ENCODE measurements at regions of chr1 and their contacts with region 1.

Region 1: GRCh38 chr1:226062558-226063223 is at the start of gene H3-3A:
- DNase-seq: peak; percentile 99
- H3K4me3 ChIP-seq: peak within 1 kb of the TSS; percentile 82 to 89 (median 86)
- H3K27ac ChIP-seq: peak within 1 kb of the TSS; percentile 99 to 100 (median 100)
- H3K4me1 ChIP-seq: peaks cover 33 to 47% (median 42%) of the 10 kb centered on the region in 4 donors
- H3K27me3 ChIP-seq: no peaks in the 10 kb centered on the region
- CTCF ChIP-seq: peak in 1 of 5 experiments; percentile 32
- EP300 ChIP-seq: no peak
- POLR2A ChIP-seq: peak; percentile 99
- total RNA-seq, gene H3-3A: 128 to 557 (median 501) TPM

Region 2: GRCh38 chr1:225999227-225999911 is 63.3 kb before region 1 on chr1 and contains the start of gene SDE2:
- in situ Hi-C with region 1: loop called in 1 of 4 experiments (anchors 5 kb)
- intact Hi-C with region 1: no loop called
- DNase-seq: peak; percentile 100
- H3K4me3 ChIP-seq: peak within 1 kb of the TSS; percentile 52 to 78 (median 72)
- H3K27ac ChIP-seq: peak within 1 kb of the TSS; percentile 96 to 100 (median 97)
- H3K4me1 ChIP-seq: peaks cover 10 to 48% (median 33%) of the 10 kb centered on the region in 4 donors
- H3K27me3 ChIP-seq: no peaks in the 10 kb centered on the region
- CTCF ChIP-seq: no peak
- EP300 ChIP-seq: peak; percentile 81
- POLR2A ChIP-seq: peak; percentile 99
- total RNA-seq, gene SDE2: 4.4 to 19.2 (median 13.2) TPM

Region 3: DNA sequence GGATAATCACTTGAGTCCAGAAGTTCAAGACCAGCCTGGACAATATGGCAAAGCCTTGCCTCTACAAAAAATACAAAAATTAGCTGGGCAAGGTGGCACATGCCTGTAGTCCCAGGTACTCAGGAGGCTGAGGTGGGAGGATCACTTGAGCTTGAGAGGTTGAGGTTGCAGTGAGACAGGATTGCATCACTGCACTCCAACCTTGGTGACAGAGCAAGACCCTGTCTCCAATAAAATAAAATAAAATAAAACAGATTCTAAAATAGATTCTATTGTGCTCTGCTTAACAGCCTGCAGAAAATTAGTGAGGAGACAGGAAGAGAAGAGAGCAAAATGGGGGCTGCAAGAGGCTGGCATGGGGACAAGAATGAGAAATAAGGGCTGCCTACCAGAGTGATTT is 56.0 kb before region 1 on chr1:
- in situ Hi-C with region 1: no loop called
- intact Hi-C with region 1: loop called (anchors 2 kb)
- DNase-seq: no peak
- H3K4me3 ChIP-seq: no peak overlapping the region
- H3K27ac ChIP-seq: no peak overlapping the region
- H3K4me1 ChIP-seq: peaks cover 0 to 6% (median 2%) of the 10 kb centered on the region in 4 donors
- H3K27me3 ChIP-seq: no peaks in the 10 kb centered on the region
- CTCF ChIP-seq: no peak
- EP300 ChIP-seq: no peak
- POLR2A ChIP-seq: no peak

Region 4: GRCh38 chr1:226121587-226122400 is 59.1 kb after region 1 on chr1:
- in situ Hi-C with region 1: loop called in 2 of 4 experiments (anchors 5 to 10 kb)
- intact Hi-C with region 1: loop called (anchors 5 kb)
- DNase-seq: peak; percentile 80
- H3K4me3 ChIP-seq: peak overlapping the region; percentile 54 to 75 (median 68)
- H3K27ac ChIP-seq: peak overlapping the region; percentile 90 to 98 (median 94)
- H3K4me1 ChIP-seq: peaks cover 16 to 42% (median 29%) of the 10 kb centered on the region in 4 donors
- H3K27me3 ChIP-seq: no peaks in the 10 kb centered on the region
- CTCF ChIP-seq: peak; percentile 52 to 92 (median 87)
- EP300 ChIP-seq: no peak
- POLR2A ChIP-seq: peak; percentile 26

Region 5: GRCh38 chr1:226223786-226224244 is 161.1 kb after region 1 on chr1:
- in situ Hi-C with region 1: no loop called
- intact Hi-C with region 1: no loop called
- DNase-seq: peak; percentile 60
- H3K4me3 ChIP-seq: peak overlapping the region in 3 of 4 donors; percentile 35 to 56 (median 42)
- H3K27ac ChIP-seq: peak overlapping the region in 1 of 4 donors; percentile 10
- H3K4me1 ChIP-seq: peaks cover 0 to 10% (median 8%) of the 10 kb centered on the region in 4 donors
- H3K27me3 ChIP-seq: peaks cover 38% of the 10 kb centered on the region
- CTCF ChIP-seq: no peak
- EP300 ChIP-seq: no peak
- POLR2A ChIP-seq: no peak